ENCODE measurements at regions of chr1 and their contacts with region 1.

Region 1: DNA sequence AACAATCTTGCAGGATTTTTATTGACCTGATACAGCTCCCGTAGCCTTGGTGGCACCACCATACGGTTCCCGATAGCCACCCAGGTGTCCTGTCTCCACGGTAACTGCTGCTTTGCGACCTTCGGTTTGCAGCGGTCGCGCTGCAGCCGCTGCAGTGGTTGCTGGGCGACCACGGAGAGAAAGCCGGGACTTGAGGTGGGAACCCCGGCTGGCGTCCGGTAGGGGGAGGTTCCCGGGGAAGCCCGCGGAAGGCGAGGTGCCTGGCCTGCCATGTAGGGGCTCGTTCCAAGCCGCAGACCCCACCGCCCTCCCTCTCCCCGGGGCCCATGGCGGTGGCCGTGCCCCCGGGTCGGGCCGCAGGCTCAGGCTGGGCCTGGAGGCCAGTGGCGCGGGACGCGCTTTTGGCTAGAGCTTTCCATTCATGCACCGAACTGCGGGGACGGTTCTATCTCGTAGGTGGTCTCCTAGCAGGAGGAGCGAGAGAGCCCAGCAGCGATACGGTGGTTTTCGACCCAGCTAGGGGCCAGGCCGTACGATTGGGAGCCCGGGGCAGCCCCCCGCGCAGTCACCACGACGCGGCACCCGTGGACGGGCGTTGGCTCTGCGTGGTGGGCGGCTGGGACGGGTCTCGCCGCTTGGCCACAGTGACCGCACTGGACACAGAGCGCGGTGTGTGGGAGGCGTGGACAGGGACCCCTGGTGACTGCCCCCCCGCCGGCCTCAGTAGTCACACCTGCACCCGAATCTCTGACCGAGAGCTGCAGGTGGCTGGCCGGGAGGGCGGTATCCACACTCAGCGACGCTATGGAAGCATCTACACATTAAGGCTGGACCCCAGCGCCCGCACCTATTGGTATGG is at the start of gene KLHDC9:
- DNase-seq: peak; percentile 88 to 92
- H3K4me3 ChIP-seq: peak within 1 kb of the TSS; percentile 60
- H3K4me3 Mint-ChIP-seq: peak within 1 kb of the TSS; percentile 70
- H3K27ac Mint-ChIP-seq: peak within 1 kb of the TSS; percentile 82
- H3K4me1 ChIP-seq: no peaks in the 10 kb centered on the region
- H3K4me1 Mint-ChIP-seq: peaks cover 16% of the 10 kb centered on the region
- H3K27me3 ChIP-seq: no peaks in the 10 kb centered on the region
- H3K27me3 Mint-ChIP-seq: no peaks in the 10 kb centered on the region
- CTCF ChIP-seq: peak in 1 of 2 experiments; percentile 26
- total RNA-seq, gene KLHDC9: 2.0 and 2.2 TPM in 2 replicates

Region 2: GRCh38 chr1:160951443-160952128 is 146.9 kb before region 1 on chr1:
- CTCF ChIA-PET with region 1: interaction called, 3 read pairs
- POLR2A ChIA-PET with region 1: no interaction called
- intact Hi-C with region 1: loop called (anchors 5 kb)
- DNase-seq: peak; percentile 75 to 78
- H3K4me3 ChIP-seq: no peak overlapping the region
- H3K4me3 Mint-ChIP-seq: no peak overlapping the region
- H3K27ac Mint-ChIP-seq: no peak overlapping the region
- H3K4me1 ChIP-seq: peaks cover 47% of the 10 kb centered on the region
- H3K4me1 Mint-ChIP-seq: peaks cover 42% of the 10 kb centered on the region
- H3K27me3 ChIP-seq: no peaks in the 10 kb centered on the region
- H3K27me3 Mint-ChIP-seq: no peaks in the 10 kb centered on the region
- CTCF ChIP-seq: peak; percentile 60 to 88

Region 3: GRCh38 chr1:161045750-161046571 is 52.5 kb before region 1 on chr1 and contains the start of gene USF1:
- CTCF ChIA-PET with region 1: interaction called, 5 read pairs
- POLR2A ChIA-PET with region 1: interaction called, 4 read pairs
- intact Hi-C with region 1: loop called (anchors 1 kb)
- DNase-seq: peak; percentile 94 to 95
- H3K4me3 ChIP-seq: peak within 1 kb of the TSS; percentile 76
- H3K4me3 Mint-ChIP-seq: peak within 1 kb of the TSS; percentile 90
- H3K27ac Mint-ChIP-seq: peak within 1 kb of the TSS; percentile 95
- H3K4me1 ChIP-seq: peaks cover 6% of the 10 kb centered on the region
- H3K4me1 Mint-ChIP-seq: no peaks in the 10 kb centered on the region
- H3K27me3 ChIP-seq: no peaks in the 10 kb centered on the region
- H3K27me3 Mint-ChIP-seq: no peaks in the 10 kb centered on the region
- CTCF ChIP-seq: no peak
- total RNA-seq, gene USF1: 49.7 and 52.7 TPM in 2 replicates

Region 4: DNA sequence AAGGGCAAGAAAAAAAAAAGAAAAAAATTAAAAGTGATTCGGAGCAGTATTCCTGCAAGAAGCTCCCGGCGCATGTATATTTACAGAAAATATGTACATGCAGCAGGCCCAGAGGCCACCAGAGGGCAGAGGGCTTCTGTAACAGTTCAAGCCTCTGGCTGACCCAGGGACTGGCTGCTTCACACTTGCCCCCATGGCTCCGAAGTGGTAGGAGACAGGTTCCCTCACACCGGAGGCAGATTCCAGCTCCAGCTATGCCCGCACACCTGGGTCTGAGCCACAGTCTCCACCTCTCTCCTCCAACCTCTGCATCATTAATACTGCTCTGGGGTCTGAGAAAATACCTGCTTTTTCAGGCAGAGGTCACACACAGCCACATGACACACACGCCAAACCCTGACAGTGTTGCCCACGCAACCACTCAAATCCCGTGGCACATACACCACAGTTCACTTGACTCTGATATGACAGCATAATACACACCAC is 26.5 kb before region 1 on chr1:
- CTCF ChIA-PET with region 1: interaction called, 32 read pairs
- POLR2A ChIA-PET with region 1: no interaction called
- intact Hi-C with region 1: loop called (anchors 1 kb)
- DNase-seq: peak; percentile 78
- H3K4me3 ChIP-seq: no peak overlapping the region
- H3K4me3 Mint-ChIP-seq: no peak overlapping the region
- H3K27ac Mint-ChIP-seq: no peak overlapping the region
- H3K4me1 ChIP-seq: no peaks in the 10 kb centered on the region
- H3K4me1 Mint-ChIP-seq: peaks cover 9% of the 10 kb centered on the region
- H3K27me3 ChIP-seq: no peaks in the 10 kb centered on the region
- H3K27me3 Mint-ChIP-seq: no peaks in the 10 kb centered on the region
- CTCF ChIP-seq: peak; percentile 74 to 82

Region 5: DNA sequence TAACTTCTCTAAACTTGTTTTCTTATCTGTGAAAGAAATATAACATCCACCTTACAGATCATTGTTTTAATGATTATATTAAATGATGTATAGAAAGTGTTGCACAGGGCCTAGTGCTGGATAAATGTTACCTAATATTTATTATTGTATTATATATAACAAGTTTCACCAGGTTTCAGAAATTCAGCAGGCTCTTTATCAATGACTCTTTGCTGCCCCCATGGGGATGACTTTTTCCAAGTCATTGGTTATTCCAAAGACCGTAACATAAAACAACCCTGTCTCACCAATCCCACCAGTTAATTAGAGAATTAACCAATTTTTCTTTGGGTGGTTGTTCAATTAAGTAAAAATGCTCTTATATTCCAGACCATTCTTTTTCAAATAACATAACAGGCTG is 41.3 kb after region 1 on chr1:
- CTCF ChIA-PET with region 1: no interaction called
- POLR2A ChIA-PET with region 1: no interaction called
- intact Hi-C with region 1: loop called (anchors 1 kb)
- DNase-seq: peak in 1 of 2 experiments; percentile 71
- H3K4me3 ChIP-seq: no peak overlapping the region
- H3K4me3 Mint-ChIP-seq: no peak overlapping the region
- H3K27ac Mint-ChIP-seq: no peak overlapping the region
- H3K4me1 ChIP-seq: no peaks in the 10 kb centered on the region
- H3K4me1 Mint-ChIP-seq: peaks cover 17% of the 10 kb centered on the region
- H3K27me3 ChIP-seq: no peaks in the 10 kb centered on the region
- H3K27me3 Mint-ChIP-seq: no peaks in the 10 kb centered on the region
- CTCF ChIP-seq: peak; percentile 52 to 54

Region 6: GRCh38 chr1:161165742-161166668 is 67.6 kb after region 1 on chr1 and contains the start of gene PPOX:
- CTCF ChIA-PET with region 1: no interaction called
- POLR2A ChIA-PET with region 1: no interaction called
- intact Hi-C with region 1: no loop called
- DNase-seq: peak; percentile 96 to 98
- H3K4me3 ChIP-seq: peak within 1 kb of the TSS; percentile 88
- H3K4me3 Mint-ChIP-seq: peak within 1 kb of the TSS; percentile 83
- H3K27ac Mint-ChIP-seq: peak within 1 kb of the TSS; percentile 81
- H3K4me1 ChIP-seq: peaks cover 3% of the 10 kb centered on the region; the same call in 1 of the 2 replicates
- H3K4me1 Mint-ChIP-seq: no peaks in the 10 kb centered on the region
- H3K27me3 ChIP-seq: no peaks in the 10 kb centered on the region
- H3K27me3 Mint-ChIP-seq: no peaks in the 10 kb centered on the region
- CTCF ChIP-seq: peak in 1 of 2 experiments; percentile 55
- total RNA-seq, gene PPOX: 25.0 and 25.4 TPM in 2 replicates